Activated CD4-positive, alpha-beta T cell treated with anti-CD3 and anti-CD28 coated beads, Interleukin-2, amount 10 ng/mL, durations not matched to agents 7 days and 5 days (primary cell): ENCODE measurements at regions of chr11 and their contacts with region 1.

Region 1: GRCh38 chr11:3905080-3905953 is 49.9 kb downstream of the STIM1 start:
- DNase-seq: peak; percentile 78
- H3K4me3 Mint-ChIP-seq: no peak overlapping the region
- H3K27ac Mint-ChIP-seq: peak overlapping the region; percentile 81
- H3K4me1 Mint-ChIP-seq: peaks cover 76% of the 10 kb centered on the region
- H3K27me3 Mint-ChIP-seq: no peaks in the 10 kb centered on the region

Region 2: DNA sequence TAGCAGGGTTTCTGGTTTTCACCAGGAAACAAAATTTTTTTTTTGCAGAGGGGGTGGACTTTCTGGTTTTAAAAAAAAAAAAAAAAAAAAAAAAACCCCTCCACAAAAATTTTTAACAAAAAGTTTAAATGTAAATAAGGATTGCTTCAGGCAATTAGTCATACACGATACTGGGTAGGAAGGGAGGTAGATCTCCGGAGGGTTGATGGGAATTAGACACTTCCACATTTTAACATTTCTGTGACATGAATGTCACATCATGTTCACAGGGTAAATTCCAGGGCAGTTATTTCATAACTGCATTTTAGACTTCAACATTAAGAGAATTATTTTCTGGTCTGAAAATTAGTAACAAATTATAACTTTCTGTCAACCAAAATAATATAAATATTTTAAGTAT is 123.9 kb before region 1 on chr11:
- CTCF ChIA-PET with region 1: no interaction called
- POLR2A ChIA-PET with region 1: no interaction called
- DNase-seq: no peak
- H3K4me3 Mint-ChIP-seq: no peak overlapping the region
- H3K27ac Mint-ChIP-seq: no peak overlapping the region
- H3K4me1 Mint-ChIP-seq: peaks cover 46% of the 10 kb centered on the region
- H3K27me3 Mint-ChIP-seq: no peaks in the 10 kb centered on the region

Region 3: DNA sequence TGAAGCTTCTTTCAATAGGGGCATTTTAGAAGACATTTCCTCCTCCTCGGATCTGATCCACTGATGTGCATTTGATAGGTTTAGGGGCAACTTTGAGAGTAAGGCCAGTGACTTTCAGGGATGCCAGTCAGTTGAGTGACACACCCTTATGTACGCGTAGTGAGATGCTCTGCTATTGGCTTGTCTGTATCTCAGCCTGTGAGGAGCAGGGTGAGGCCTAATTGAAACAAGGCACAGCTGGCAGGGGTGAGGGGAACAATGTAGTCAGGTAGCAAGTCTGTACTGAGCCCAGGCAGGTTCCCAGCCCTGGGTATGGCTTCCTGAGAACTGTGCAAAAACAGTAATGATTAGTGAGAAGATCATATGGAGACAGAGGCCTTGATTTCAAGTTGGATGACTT is 11.6 kb after region 1 on chr11:
- CTCF ChIA-PET with region 1: interaction called, 13 read pairs
- POLR2A ChIA-PET with region 1: no interaction called
- DNase-seq: no peak
- H3K4me3 Mint-ChIP-seq: no peak overlapping the region
- H3K27ac Mint-ChIP-seq: peak overlapping the region; percentile 81
- H3K4me1 Mint-ChIP-seq: peaks cover 69% of the 10 kb centered on the region
- H3K27me3 Mint-ChIP-seq: no peaks in the 10 kb centered on the region

Region 4: GRCh38 chr11:4105916-4106315 is 200.6 kb after region 1 on chr11:
- CTCF ChIA-PET with region 1: no interaction called
- POLR2A ChIA-PET with region 1: no interaction called
- DNase-seq: no peak
- H3K4me3 Mint-ChIP-seq: no peak overlapping the region
- H3K27ac Mint-ChIP-seq: no peak overlapping the region
- H3K4me1 Mint-ChIP-seq: peaks cover 21% of the 10 kb centered on the region
- H3K27me3 Mint-ChIP-seq: no peaks in the 10 kb centered on the region